GM13977 (cell line): ENCODE measurements at regions of chr5 and their contacts with region 1.

Region 1: GRCh38 chr5:154418344-154418820 is 27.4 kb upstream of the SAP30L start:
- DNase-seq: no peak
- CTCF ChIP-seq: no peak

Region 2: GRCh38 chr5:154060606-154061005 is 357.8 kb before region 1 on chr5:
- in situ Hi-C with region 1: loop called (anchors 10 kb)
- DNase-seq: no peak
- CTCF ChIP-seq: no peak